ENCODE measurements at regions of chr17 and their contacts with region 1.

Region 1: GRCh38 chr17:77280980-77281903 is 140.5 kb downstream of the SEC14L1 start:
- DNase-seq: peak; percentile 84
- ATAC-seq: peak; percentile 96
- H3K4me3 ChIP-seq: peak overlapping the region in 4 of 5 experiments; percentile 45 to 66 (median 57)
- H3K4me3 Mint-ChIP-seq: peak overlapping the region; percentile 88
- H3K27ac ChIP-seq: no peak overlapping the region
- H3K27ac Mint-ChIP-seq: peak overlapping the region; percentile 94
- H3K4me1 ChIP-seq: peaks cover 25% of the 10 kb centered on the region in 2 donors
- H3K4me1 Mint-ChIP-seq: peaks cover 24% of the 10 kb centered on the region
- H3K27me3 ChIP-seq: peaks cover 0 to 26% (median 8%) of the 10 kb centered on the region in 4 experiments
- H3K27me3 Mint-ChIP-seq: peaks cover 28% of the 10 kb centered on the region
- CTCF ChIP-seq: peak; percentile 25

Region 2: DNA sequence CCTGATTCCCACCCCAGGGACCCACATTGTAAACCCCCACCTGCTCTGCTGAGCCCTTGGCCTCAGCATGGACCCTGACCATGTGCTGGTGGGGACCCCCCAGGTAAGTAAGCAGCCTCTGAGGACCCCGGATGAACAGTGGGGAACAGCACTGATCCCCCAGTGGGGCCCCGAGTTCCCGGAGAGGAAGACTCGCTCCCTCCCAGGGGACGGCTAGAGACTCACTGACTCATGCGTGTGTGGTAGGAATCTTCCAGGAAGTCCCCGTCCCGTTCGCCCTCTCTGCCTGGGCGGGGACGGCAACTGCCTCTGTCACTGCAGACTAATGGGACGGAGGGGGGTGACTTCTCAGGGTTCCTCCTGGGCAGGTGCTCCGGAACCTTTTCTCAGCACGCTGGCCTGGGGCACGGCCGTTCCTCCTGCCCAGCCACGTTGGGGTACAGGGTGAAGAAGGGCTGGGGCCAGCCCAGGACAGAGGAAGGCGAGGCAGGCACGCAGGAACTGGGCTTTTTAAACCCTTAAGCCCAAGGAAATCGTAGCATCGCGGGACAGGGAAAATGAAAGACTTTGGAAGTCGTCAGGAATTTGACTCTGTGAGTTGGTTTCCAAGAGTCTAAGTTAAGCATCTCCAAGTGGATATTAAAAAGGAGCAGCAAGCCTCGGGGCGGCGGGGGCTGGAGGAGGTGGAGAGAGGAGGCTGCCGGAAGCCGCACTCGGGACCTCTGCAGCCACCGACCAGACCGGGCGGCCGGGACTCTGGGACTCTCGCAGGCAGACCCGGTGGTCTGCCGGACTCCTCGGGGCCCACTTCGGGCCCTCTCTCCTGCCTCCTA is 38.2 kb after region 1 on chr17:
- CTCF ChIA-PET with region 1: interaction called, 4 read pairs
- POLR2A ChIA-PET with region 1: no interaction called
- intact Hi-C with region 1: loop called (anchors 2 kb)
- DNase-seq: peak; percentile 84
- ATAC-seq: peak; percentile 34
- H3K4me3 ChIP-seq: peak overlapping the region in 4 of 5 experiments; percentile 16 to 51 (median 33)
- H3K4me3 Mint-ChIP-seq: peak overlapping the region; percentile 91
- H3K27ac ChIP-seq: peak overlapping the region; percentile 53 to 75
- H3K27ac Mint-ChIP-seq: peak overlapping the region; percentile 90
- H3K4me1 ChIP-seq: peaks cover 62 to 66% of the 10 kb centered on the region in 2 donors
- H3K4me1 Mint-ChIP-seq: peaks cover 65% of the 10 kb centered on the region
- H3K27me3 ChIP-seq: no peaks in the 10 kb centered on the region
- H3K27me3 Mint-ChIP-seq: no peaks in the 10 kb centered on the region
- CTCF ChIP-seq: no peak

Region 3: GRCh38 chr17:77331301-77331864 is 50.1 kb after region 1 on chr17:
- CTCF ChIA-PET with region 1: interaction called, 6 read pairs
- POLR2A ChIA-PET with region 1: no interaction called
- intact Hi-C with region 1: loop called (anchors 5 kb)
- DNase-seq: peak; percentile 94
- ATAC-seq: peak; percentile 89
- H3K4me3 ChIP-seq: peak overlapping the region in 4 of 5 experiments; percentile 21 to 65 (median 36)
- H3K4me3 Mint-ChIP-seq: peak overlapping the region; percentile 82
- H3K27ac ChIP-seq: peak overlapping the region; percentile 67 to 77
- H3K27ac Mint-ChIP-seq: peak overlapping the region; percentile 85
- H3K4me1 ChIP-seq: peaks cover 41 to 66% of the 10 kb centered on the region in 2 donors
- H3K4me1 Mint-ChIP-seq: peaks cover 53% of the 10 kb centered on the region
- H3K27me3 ChIP-seq: no peaks in the 10 kb centered on the region
- H3K27me3 Mint-ChIP-seq: no peaks in the 10 kb centered on the region
- CTCF ChIP-seq: peak; percentile 93